CD4-positive, alpha-beta memory T cell (primary cell): ENCODE measurements at regions of chr1 and their contacts with region 1.

Region 1: DNA sequence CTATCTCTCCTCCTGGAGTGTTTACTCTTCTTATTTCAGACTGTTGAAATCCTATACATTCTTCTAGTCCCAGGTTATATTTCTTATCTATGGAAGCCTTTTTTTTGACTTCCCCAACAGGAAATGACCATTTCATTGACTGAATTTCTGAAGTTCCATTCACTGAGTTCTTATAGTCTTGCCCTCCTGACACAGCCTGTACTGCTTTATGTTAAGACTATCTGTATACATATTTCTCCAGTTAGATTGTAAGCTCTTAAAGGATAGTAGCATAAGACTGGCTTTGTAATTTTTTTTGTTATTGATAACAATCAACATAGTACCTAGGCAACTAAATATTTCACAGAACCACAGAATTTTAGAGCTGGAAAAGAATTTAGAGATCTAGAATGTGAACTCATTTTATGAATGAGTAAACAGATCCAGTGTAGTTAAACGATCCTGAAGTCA is 14.9 kb upstream of the MACF1 start:
- DNase-seq: no peak
- H3K4me3 ChIP-seq: no peak overlapping the region
- H3K4me3 Mint-ChIP-seq: peak overlapping the region in 1 of 8 donors; percentile 61
- H3K27ac ChIP-seq: no peak overlapping the region
- H3K27ac Mint-ChIP-seq: peak overlapping the region in 6 of 7 donors; percentile 5 to 94 (median 78)
- H3K4me1 ChIP-seq: peaks cover 60% of the 10 kb centered on the region
- H3K4me1 Mint-ChIP-seq: peaks cover 35 to 76% (median 48%) of the 10 kb centered on the region in 4 donors
- H3K27me3 ChIP-seq: no peaks in the 10 kb centered on the region
- H3K27me3 Mint-ChIP-seq: no peaks in the 10 kb centered on the region

Region 2: GRCh38 chr1:39230261-39231190 is 40.9 kb after region 1 on chr1:
- CTCF ChIA-PET with region 1: interaction called, 90 read pairs
- POLR2A ChIA-PET with region 1: interaction called, 18 read pairs
- intact Hi-C with region 1: loop called (anchors 1 kb)
- DNase-seq: peak in 3 of 5 donors; percentile 20 to 47 (median 23)
- H3K4me3 ChIP-seq: no peak overlapping the region
- H3K4me3 Mint-ChIP-seq: peak overlapping the region in 7 of 8 donors; percentile 22 to 81 (median 64)
- H3K27ac ChIP-seq: peak overlapping the region; percentile 44
- H3K27ac Mint-ChIP-seq: peak overlapping the region; percentile 59 to 90 (median 86)
- H3K4me1 ChIP-seq: peaks cover 64% of the 10 kb centered on the region
- H3K4me1 Mint-ChIP-seq: peaks cover 52 to 71% (median 62%) of the 10 kb centered on the region in 4 donors
- H3K27me3 ChIP-seq: no peaks in the 10 kb centered on the region
- H3K27me3 Mint-ChIP-seq: no peaks in the 10 kb centered on the region

Region 3: GRCh38 chr1:39538588-39539465 is 349.2 kb after region 1 on chr1:
- CTCF ChIA-PET with region 1: interaction called, 7 read pairs
- POLR2A ChIA-PET with region 1: no interaction called
- intact Hi-C with region 1: loop called (anchors 5 kb)
- DNase-seq: peak; percentile 38 to 49 (median 46)
- H3K4me3 ChIP-seq: no peak overlapping the region
- H3K4me3 Mint-ChIP-seq: no peak overlapping the region
- H3K27ac ChIP-seq: no peak overlapping the region
- H3K27ac Mint-ChIP-seq: peak overlapping the region in 1 of 7 donors; percentile 42
- H3K4me1 ChIP-seq: no peaks in the 10 kb centered on the region
- H3K4me1 Mint-ChIP-seq: peaks cover 0 to 5% (median 2%) of the 10 kb centered on the region in 4 donors
- H3K27me3 ChIP-seq: no peaks in the 10 kb centered on the region
- H3K27me3 Mint-ChIP-seq: no peaks in the 10 kb centered on the region